Posterior cingulate gyrus (tissue), 11 donors: ENCODE measurements at regions of chr5 and their contacts with region 1.

Region 1: DNA sequence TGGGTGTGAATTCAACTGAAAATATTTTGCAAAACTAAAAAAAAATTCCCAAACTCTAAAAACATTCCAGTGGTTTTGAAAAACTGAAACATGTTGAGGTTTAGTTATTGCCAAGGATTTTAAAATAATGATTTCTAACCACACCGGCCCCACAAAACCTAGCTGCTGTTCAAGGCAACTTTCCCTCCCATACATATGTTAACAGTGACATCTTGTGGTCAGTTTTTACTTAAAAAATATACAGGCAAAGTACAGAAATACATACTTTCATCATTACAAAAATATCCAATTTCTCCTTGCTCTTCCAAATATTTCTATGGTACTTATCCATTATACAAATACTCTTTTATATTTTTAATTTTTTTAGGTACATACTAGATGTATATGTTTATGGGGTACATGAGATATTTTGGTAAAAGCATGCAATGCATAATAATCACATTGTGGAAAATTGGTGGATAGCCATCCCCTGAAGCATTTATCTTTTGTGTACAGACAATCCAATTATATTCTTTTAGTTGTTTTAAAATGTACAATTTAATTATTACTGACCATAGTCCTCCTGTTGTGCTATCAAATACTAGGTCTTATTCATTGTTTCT is 34.4 kb upstream of the MRPS30 start:
- DNase-seq: peak in 2 of 10 donors; percentile 11 to 13

Region 2: DNA sequence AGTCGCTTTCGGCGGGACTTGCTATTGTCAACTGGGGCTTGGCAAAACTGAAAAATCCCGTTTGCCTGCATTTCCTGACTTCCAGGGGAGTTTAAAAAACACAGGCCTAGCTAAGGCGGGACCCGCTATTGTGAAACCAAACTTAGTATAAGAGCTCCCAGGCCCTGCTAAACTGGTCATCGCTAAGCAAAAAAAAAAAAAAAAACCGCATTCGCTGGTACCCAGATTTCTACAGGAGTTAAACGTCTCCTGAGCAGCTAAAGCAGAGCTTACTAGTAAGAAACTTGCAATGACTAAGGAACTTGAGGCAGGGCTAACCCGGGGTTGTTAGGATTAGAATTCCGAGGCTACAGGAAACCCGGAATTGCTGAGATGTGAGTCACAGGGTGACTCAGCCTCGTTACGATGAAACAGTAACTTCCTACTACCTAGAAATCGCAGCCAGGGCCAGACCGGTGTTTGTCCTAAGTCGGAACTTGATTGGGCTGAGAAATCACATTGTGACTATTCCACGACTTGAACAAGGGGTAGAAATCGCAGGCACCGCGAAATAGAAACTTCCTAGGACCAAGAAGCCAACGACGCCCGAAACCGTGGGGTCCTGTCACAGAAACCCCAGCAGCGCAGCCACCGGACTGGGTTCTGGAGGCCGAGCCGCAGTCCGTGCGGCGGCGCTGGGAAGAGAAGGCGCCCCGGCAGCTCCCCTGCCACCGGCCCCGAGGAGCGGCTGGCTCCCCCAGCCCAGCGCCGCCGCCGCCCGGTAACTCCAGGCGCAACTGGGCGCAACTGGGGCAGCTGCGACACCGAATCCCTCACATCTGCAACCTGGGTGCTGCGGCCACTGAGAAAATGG is 1823.7 kb before region 1 on chr5:
- intact Hi-C with region 1: loop called (anchors 10 kb)
- DNase-seq: peak in 1 of 10 donors; percentile 20

Region 3: GRCh38 chr5:43729846-43730478 is 1044.4 kb before region 1 on chr5:
- intact Hi-C with region 1: loop called (anchors 5 kb)
- DNase-seq: no peak

Region 4: DNA sequence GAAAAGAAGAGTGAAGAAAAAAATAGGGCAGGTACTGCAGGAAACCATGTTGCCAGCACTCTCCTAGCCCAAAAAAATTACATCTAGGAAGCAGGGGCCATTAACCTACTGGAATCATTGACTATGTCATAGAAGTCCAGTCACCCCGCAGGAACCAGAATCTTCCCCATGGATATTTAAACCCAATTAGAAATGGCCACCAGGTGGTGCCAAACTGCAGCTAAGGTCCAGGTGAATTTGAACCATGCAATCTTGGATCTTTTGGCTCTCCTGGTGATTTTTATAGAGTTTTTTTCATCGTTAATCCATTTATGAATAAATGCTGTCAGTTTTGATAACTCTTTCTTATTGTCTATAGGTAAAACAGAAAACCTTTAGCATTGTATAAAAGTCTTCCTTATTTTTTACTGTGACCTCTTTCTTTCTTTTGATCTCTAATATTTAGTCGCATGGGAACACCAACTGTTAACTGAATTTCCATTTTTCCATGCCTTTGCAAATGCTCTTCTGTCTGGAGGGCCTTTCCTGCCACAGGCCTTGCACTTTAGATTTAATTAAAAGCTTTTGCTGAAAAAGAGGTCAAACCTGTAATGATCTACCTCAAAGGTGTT is 237.6 kb before region 1 on chr5:
- intact Hi-C with region 1: loop called (anchors 2 kb)
- DNase-seq: peak in 2 of 10 donors; percentile 15 to 24